ENCODE measurements at regions of chr6 and their contacts with region 1.

Region 1: DNA sequence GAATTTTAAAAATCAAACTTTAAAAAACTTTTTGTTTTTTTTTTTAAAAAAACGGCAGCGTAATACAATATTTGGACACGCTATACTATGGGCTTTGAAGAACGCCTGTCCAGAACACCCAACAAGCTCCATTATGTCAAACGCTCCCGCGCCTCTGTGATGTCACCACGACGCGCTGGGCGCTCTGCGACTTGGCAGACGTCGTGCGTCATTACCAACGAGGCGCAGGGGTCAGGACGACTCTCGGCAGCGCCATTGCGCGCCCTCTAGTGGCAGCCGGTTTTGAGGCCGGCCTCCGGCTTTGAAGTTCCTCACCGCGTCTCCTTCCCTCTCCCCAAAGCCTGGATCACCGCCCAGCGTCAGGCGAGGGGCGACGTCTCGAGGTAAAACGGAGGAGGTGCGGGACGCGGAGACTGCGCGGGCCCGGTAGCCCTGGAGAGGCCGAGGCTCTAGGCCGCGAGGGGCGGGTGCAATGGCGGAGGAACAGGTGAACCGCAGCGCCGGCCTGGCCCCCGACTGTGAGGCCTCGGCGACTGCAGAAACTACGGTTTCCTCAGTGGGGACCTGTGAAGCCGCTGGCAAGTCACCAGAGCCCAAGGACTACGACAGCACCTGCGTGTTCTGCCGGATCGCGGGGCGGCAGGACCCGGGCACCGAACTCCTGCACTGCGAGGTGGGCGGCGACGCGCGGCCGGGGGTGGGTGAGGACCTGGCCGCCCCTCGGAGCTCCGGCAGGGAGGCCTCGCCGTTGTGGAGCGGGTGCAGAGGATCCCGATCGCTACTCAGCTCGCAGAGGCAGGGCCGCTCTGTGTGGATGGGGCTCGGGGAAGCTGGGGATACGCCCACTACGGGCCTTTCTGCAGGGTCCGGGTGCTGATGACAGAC is at the start of gene HINT3:
- DNase-seq: peak; percentile 95
- CTCF ChIP-seq: peak; percentile 94

Region 2: DNA sequence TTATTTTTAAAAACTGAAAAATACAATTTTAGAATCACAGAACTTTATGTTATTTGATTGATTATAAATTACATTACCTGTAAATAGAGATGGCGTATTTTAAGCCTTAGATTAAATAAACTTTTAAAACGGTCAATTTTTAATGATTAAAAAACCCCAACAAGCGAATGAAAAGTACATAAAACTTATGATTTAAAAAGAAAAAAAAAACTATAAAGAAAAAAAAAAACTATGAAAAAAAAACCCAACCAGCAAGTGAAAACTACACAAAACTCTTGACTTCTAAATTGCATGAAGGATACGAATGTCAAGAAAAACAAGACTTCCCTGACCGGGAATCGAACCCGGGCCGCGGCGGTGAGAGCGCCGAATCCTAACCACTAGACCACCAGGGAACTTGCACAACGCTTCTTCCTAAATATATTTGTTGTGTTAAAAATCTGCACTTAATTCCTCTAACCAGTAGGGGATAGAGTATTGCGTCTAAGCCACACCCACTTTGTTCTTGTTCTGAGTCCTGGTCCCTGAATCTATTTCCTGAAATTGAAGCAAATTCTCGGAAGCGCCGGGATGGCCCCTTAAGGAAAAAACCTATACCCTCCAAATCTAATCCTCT is 176.7 kb before region 1 on chr6:
- CTCF ChIA-PET with region 1: interaction called, 241 read pairs
- POLR2A ChIA-PET with region 1: interaction called, 5 read pairs
- DNase-seq: peak; percentile 86
- CTCF ChIP-seq: no peak

Region 3: GRCh38 chr6:125858427-125859320 is 98.1 kb before region 1 on chr6:
- CTCF ChIA-PET with region 1: interaction called, 18 read pairs
- POLR2A ChIA-PET with region 1: no interaction called
- DNase-seq: peak; percentile 45
- CTCF ChIP-seq: peak; percentile 62

Region 4: DNA sequence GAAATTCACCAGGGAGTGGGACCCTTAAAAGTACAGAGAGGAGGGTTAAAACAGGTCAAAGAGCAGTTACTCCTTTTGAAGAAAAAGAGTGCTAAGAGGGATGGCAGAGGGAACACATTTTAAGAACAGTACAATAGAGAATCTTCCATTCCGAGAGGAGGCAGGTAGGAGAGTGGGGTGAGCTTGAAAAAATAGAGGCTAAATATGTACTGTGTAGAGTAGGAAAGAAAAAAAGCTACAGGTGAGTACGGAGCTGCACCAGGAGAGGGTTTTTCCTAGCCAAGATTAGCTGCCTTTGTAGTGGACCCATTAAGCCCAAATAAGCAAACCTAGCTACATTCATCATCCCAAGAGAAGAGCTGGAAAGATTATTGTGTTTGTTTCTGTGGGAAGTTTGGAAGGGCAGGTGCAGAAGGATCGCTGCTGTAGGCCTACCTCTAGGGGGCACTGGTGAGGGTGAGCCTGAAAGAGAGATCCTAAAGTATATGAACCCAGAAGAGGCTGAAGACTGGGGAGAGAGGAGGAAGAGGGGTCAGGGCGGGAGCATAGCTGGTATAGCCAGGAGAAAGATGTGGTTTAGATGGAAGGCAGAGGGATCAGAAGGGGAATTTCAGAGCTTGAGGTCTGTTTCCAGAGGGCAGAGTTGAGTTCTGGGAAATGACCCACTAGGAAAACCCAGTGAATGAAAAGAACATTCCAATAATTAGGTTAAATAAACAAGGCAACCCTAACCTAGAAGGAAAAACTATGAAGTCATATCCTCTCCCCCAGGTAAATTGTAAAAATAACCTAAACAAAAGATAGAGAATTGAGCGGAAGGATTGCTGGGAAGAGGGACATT is 50.4 kb before region 1 on chr6:
- CTCF ChIA-PET with region 1: interaction called, 33 read pairs
- POLR2A ChIA-PET with region 1: interaction called, 4 read pairs
- DNase-seq: peak; percentile 41
- CTCF ChIP-seq: peak; percentile 74

Region 5: DNA sequence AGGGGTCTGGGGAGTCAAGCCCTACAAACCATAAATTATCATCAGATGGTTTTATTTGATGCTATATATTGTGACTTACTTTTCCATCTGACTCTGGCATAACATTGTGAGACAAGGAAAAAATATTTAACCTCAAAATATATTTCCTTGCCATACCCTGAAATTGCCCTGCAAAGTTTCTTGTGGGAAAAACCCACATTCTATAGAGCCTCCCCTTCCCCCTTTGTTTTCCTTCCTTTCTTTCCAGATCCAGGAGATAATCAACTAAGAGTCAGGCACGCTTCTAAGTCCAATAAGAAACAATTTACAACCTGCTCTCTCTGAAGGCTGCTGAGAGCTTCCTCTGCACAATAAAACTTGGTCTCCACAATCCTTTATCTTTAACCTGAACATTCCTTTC is 17.7 kb before region 1 on chr6:
- CTCF ChIA-PET with region 1: interaction called, 61 read pairs
- POLR2A ChIA-PET with region 1: no interaction called
- DNase-seq: no peak
- CTCF ChIP-seq: no peak

Region 6: GRCh38 chr6:125986300-125987025 is 29.7 kb after region 1 on chr6 and contains the start of gene TRMT11:
- CTCF ChIA-PET with region 1: interaction called, 19 read pairs
- POLR2A ChIA-PET with region 1: no interaction called
- DNase-seq: peak; percentile 92
- CTCF ChIP-seq: no peak

Region 7: GRCh38 chr6:126091507-126091906 is 134.8 kb after region 1 on chr6:
- CTCF ChIA-PET with region 1: no interaction called
- POLR2A ChIA-PET with region 1: no interaction called
- DNase-seq: no peak
- CTCF ChIP-seq: no peak